ENCODE measurements at regions of chr16 and their contacts with region 1.

Region 1: GRCh38 chr16:89700100-89700648 is 1.3 kb downstream of the SPATA2L start:
- DNase-seq: peak; percentile 99
- H3K4me3 Mint-ChIP-seq: peak overlapping the region; percentile 71
- H3K27ac Mint-ChIP-seq: no peak overlapping the region
- H3K4me1 Mint-ChIP-seq: no peaks in the 10 kb centered on the region
- H3K27me3 Mint-ChIP-seq: no peaks in the 10 kb centered on the region
- CTCF ChIP-seq: peak; percentile 82

Region 2: GRCh38 chr16:89686520-89687091 is 13.6 kb before region 1 on chr16 and contains the start of gene CDK10:
- CTCF ChIA-PET with region 1: interaction called, 11 read pairs
- POLR2A ChIA-PET with region 1: interaction called, 24 read pairs
- intact Hi-C with region 1: no loop called
- DNase-seq: peak; percentile 85
- H3K4me3 Mint-ChIP-seq: peak within 1 kb of the TSS; percentile 88
- H3K27ac Mint-ChIP-seq: peak within 1 kb of the TSS; percentile 91
- H3K4me1 Mint-ChIP-seq: peaks cover 6% of the 10 kb centered on the region
- H3K27me3 Mint-ChIP-seq: no peaks in the 10 kb centered on the region
- CTCF ChIP-seq: no peak
- total RNA-seq, gene CDK10: 73.0 and 83.4 TPM in 2 replicates

Region 3: DNA sequence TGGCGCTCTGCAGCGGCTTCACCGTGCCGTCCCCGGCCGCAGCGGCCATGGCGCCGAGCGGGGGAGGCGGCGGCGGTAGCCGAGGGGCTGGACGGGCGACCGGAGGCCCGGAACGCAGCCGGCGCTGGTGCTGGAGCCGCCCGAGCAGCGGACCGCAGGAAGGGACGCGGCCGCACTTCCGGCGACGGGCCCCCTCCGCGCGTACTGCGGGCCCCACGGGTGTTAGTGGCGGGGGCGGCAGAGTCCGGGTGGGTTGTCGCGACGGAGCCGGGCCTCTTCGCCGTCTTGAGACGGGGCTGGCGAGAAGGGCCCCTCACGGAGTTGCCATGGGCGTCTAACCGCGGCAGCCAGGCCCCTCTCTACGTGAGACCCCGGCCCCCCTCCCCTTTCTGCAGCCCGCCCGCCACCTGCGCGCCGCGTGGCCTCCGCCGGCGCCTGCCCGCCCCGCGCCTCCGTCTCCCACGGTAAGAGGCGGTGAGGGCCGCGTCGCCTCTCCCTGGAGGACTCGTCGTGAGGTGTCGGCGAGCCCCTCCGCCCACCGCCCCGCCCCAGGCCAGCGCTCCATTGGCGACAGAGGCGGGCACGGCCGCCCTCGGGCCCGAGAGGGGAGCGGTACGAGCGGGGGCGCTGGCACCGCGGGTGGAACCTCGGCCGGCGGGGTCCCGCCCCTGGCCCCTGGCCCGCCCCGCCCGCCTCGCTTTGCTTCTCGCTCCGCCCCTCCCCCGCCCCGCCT is 20.8 kb after region 1 on chr16 and contains the starts of genes VPS9D1 and ZNF276:
- CTCF ChIA-PET with region 1: interaction called, 6 read pairs
- POLR2A ChIA-PET with region 1: interaction called, 46 read pairs
- intact Hi-C with region 1: loop called (anchors 1 kb)
- DNase-seq: peak; percentile 83
- H3K4me3 Mint-ChIP-seq: peak within 1 kb of the TSS; percentile 82
- H3K27ac Mint-ChIP-seq: peak within 1 kb of the TSS; percentile 71
- H3K4me1 Mint-ChIP-seq: peaks cover 25% of the 10 kb centered on the region
- H3K27me3 Mint-ChIP-seq: no peaks in the 10 kb centered on the region
- CTCF ChIP-seq: no peak
- total RNA-seq, gene VPS9D1: 12.0 and 13.2 TPM in 2 replicates
- total RNA-seq, gene ZNF276: 32.7 and 33.6 TPM in 2 replicates

Region 4: GRCh38 chr16:89860747-89861304 is 160.7 kb after region 1 on chr16:
- CTCF ChIA-PET with region 1: interaction called, 56 read pairs
- POLR2A ChIA-PET with region 1: interaction called, 13 read pairs
- intact Hi-C with region 1: loop called (anchors 1 kb)
- DNase-seq: peak; percentile 61
- H3K4me3 Mint-ChIP-seq: no peak overlapping the region
- H3K27ac Mint-ChIP-seq: no peak overlapping the region
- H3K4me1 Mint-ChIP-seq: peaks cover 27% of the 10 kb centered on the region
- H3K27me3 Mint-ChIP-seq: no peaks in the 10 kb centered on the region
- CTCF ChIP-seq: peak; percentile 98

Region 5: GRCh38 chr16:89922884-89923690 is 222.9 kb after region 1 on chr16 and contains the start of gene TUBB3:
- CTCF ChIA-PET with region 1: no interaction called
- POLR2A ChIA-PET with region 1: interaction called, 4 read pairs
- intact Hi-C with region 1: loop called (anchors 5 kb)
- DNase-seq: peak; percentile 73
- H3K4me3 Mint-ChIP-seq: peak within 1 kb of the TSS; percentile 74
- H3K27ac Mint-ChIP-seq: peak within 1 kb of the TSS; percentile 76
- H3K4me1 Mint-ChIP-seq: peaks cover 13% of the 10 kb centered on the region
- H3K27me3 Mint-ChIP-seq: no peaks in the 10 kb centered on the region
- CTCF ChIP-seq: no peak
- total RNA-seq, gene TUBB3: 20.2 and 23.0 TPM in 2 replicates